Esophagus squamous epithelium (tissue), 5 donors: ENCODE measurements at regions of chrX and their contacts with region 1.

Region 1: DNA sequence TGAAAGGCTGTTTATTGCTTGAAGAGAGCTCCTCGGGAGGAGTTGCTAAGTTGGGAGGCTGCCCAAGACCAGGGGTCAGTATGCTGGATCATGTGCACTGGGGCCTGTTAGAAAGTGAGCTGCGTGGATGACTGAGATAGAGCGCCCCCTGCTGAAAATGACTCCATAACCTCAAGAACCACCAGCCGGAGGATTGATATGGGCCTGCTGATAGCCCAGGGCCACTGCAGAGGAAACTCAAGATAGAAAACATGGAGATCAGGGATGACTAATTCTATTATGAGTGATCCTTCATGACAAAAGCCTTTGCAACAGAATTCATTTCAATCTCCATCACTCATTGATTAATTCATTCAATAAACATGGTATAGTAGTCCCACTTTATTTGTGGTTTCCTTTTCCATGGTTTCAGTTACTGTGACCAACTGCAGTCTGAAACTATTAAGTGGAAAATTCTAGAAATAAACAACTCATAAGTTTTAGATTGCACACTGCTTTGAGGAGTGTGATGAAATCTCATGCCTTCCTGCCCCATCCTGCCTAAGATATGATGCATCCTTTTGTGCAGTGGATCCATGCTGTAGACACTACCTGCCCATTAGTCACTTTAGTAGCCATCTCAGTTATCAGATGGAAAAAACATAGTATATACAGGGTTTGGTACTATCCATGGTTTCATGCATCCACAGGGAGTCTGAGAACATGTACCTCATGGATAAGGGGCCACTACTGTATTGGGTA is 126.7 kb upstream of the MBNL3 start:
- DNase-seq: no peak
- H3K4me3 ChIP-seq: no peak overlapping the region
- H3K27ac ChIP-seq: no peak overlapping the region
- H3K4me1 ChIP-seq: no peaks in the 10 kb centered on the region
- H3K27me3 ChIP-seq: peaks cover 0 to 2% (median 0%) of the 10 kb centered on the region in 4 donors
- CTCF ChIP-seq: peak in 4 of 6 experiments; percentile 18 to 37 (median 31)
- POLR2A ChIP-seq: no peak

Region 2: DNA sequence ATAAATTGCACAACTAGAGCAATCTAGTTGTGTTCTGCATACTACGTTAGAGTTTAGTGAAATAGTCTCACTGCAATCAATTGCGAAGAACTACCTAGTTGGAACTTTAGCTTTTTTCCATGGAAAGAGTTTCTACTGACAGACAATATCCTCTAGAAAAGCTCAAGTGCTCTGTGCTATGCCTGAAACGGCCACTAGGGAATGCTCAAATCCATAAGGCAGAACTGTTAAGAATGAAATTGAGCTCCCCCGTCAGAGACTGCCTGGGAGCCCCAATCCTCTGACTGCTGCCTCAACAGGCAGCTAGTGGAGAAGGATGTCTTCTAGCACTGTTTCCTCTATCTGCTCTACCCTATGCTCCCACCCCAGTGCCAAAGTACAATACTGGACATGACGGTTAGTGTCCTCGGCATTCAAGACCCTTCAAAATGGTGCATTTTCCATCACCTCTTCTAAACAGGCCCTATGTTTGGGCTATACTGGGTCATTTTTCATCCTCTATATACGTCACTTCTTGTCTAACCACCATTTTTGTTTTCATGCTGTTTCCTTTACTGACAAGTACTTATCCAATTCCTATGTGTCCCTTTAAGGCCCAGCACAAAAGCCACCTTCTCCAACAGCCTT is 523.0 kb before region 1 on chrX:
- intact Hi-C with region 1: loop called (anchors 10 kb)
- DNase-seq: no peak
- H3K4me3 ChIP-seq: no peak overlapping the region
- H3K27ac ChIP-seq: no peak overlapping the region
- H3K4me1 ChIP-seq: no peaks in the 10 kb centered on the region
- H3K27me3 ChIP-seq: peaks cover 0 to 3% (median 0%) of the 10 kb centered on the region in 4 donors
- CTCF ChIP-seq: peak; percentile 20 to 82 (median 68)
- POLR2A ChIP-seq: no peak

Region 3: DNA sequence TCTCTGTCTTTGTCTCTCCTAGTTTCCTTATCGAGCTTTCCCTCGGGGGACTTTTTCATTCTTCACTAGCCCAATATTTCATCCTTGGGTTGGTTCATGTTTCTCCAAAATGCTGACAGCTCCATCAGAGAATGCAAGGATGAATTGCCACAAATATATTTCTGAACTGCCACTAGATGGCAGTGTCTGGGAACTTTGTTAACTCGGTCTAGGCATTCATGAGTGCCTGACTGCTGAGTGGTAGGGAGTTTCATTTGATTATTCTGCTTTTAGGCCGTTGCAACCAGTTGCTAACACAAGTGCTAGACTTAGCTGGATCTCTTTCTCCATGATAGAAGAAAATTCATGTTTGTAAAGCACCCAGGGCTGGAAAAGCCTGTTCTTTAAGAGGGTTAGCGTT is 322.8 kb before region 1 on chrX:
- intact Hi-C with region 1: loop called (anchors 10 kb)
- DNase-seq: no peak
- H3K4me3 ChIP-seq: no peak overlapping the region
- H3K27ac ChIP-seq: no peak overlapping the region
- H3K4me1 ChIP-seq: no peaks in the 10 kb centered on the region
- H3K27me3 ChIP-seq: no peaks in the 10 kb centered on the region
- CTCF ChIP-seq: peak; percentile 42 to 66 (median 58)
- POLR2A ChIP-seq: no peak